ENCODE measurements at regions of chr14 and their contacts with region 1.

Region 1: DNA sequence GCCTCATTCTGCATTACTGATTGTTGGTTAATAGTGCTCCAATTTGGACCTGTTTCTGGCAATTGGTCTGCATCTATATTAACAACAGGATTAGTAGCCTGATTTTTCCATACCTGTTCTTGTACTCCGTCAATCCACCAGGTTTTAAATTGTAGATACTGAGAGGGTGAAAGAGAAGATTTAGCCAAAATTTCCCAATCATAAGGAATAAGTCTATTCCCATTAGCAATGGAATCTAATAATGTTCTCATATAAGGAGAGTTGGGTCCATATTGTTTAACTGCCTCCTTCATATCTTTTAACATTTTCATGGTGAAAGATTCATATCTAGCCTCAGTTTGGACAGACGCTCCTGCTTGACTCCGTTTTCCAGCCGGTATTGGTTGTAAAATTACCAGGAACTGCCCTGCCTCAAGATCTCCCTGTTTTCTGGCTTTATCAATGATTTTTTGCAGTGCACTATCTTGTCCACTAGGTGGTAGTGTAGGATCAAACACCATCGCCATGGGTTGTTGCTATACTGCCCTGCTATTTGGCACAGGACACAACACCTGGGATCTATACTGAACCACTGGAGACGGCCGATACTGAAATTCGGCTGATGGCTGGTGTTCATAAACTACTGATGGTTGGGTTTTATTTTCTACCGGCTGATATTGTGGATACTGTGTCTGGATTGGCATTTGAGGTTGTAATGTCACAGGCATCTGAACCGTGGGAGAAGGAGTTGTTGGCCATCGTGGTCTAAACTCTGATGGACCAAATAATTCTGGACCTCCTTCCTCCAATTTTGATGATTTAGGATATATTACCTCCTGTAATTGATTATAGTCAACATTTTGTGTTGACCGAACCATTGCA is 25.2 kb downstream of the DHRS4L2 start:
- DNase-seq: no peak
- H3K4me3 ChIP-seq: no peak overlapping the region
- H3K27ac ChIP-seq: no peak overlapping the region
- H3K4me1 ChIP-seq: peaks cover 0 to 21% (median 8%) of the 10 kb centered on the region in 6 donors
- H3K27me3 ChIP-seq: no peaks in the 10 kb centered on the region
- CTCF ChIP-seq: peak; percentile 69 to 96 (median 89)
- POLR2A ChIP-seq: no peak

Region 2: GRCh38 chr14:23942387-23942986 is 71.4 kb before region 1 on chr14:
- intact Hi-C with region 1: no loop called
- DNase-seq: no peak
- H3K4me3 ChIP-seq: no peak overlapping the region
- H3K27ac ChIP-seq: no peak overlapping the region
- H3K4me1 ChIP-seq: no peaks in the 10 kb centered on the region
- H3K27me3 ChIP-seq: no peaks in the 10 kb centered on the region
- CTCF ChIP-seq: no peak
- POLR2A ChIP-seq: no peak

Region 3: DNA sequence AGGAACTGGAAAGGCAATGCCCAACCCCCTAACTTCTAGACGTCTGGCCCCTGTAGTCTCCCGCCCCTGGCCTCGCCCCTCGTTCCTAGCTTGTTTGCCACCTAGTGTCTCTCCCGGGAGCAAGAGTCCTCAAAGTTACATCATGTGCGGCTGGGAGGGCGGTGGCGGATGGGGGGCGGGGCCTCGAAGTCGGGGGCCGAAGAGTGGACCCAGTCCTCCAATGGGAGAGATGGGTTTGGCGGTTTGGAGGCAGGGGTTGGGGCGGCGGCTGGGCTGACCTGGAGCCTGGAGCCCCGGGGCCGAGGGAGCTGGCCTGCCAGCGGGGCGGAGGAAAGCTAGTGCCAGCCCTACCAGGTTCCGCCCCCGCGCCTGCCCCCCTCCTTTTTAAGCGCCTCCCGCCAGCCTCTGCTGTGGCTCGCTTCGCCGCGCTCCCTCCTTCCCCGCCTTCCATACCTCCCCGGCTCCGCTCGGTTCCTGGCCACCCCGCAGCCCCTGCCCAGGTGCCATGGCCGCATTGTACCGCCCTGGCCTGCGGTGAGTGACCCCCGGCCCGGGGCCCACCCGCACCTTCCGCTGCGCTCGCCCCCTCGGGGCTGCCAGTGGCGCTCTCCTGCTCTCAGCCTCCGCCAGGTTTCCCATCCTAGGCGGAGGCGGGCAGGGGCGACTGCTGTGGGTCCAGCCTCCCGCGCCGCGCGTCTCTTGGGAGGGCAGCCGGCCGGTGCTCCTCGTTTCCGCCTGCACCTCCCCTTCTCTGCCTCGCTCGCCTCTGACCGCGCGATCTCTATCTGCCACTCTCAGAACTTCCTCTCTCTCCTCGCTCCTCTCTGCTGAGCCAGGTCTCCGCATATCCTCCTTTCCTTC is 80.2 kb after region 1 on chr14 and contains the start of gene PCK2:
- intact Hi-C with region 1: loop called (anchors 5 kb)
- DNase-seq: peak; percentile 96
- H3K4me3 ChIP-seq: peak within 1 kb of the TSS; percentile 63 to 91 (median 77)
- H3K27ac ChIP-seq: peak within 1 kb of the TSS; percentile 96 to 100 (median 99)
- H3K4me1 ChIP-seq: peaks cover 10 to 52% (median 34%) of the 10 kb centered on the region in 6 donors
- H3K27me3 ChIP-seq: no peaks in the 10 kb centered on the region
- CTCF ChIP-seq: peak in 6 of 11 experiments; percentile 1 to 46 (median 18)
- POLR2A ChIP-seq: peak in 1 of 3 donors; percentile 15
- total RNA-seq, gene PCK2: 31.4 to 52.3 (median 34.9) TPM

Measured in spleen (tissue), 13 donors.